CD14-positive monocyte (primary cell): ENCODE measurements at regions of chr16 and their contacts with region 1.

Region 1: DNA sequence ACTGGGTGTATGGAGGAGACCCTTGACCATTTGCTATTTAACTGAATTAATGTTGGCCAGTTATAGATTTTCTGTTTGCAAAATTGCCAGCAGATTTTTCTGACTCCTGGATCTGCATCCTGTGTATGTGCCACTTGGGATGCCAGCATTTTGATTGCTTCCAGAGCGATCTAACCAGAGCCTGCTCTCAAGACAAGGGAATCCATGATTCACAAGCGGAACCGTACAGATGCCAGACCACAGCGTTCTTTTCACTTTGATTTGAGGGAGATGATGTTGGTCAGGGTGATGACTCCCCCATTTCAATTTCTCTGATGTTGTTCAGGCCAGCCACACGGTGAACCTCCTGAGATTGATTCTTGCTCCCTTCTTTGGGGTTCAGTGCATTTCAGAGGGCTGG is 228.7 kb downstream of the CDH13 start:
- DNase-seq: no peak
- H3K4me3 ChIP-seq: no peak overlapping the region
- H3K4me3 Mint-ChIP-seq: no peak overlapping the region
- H3K27ac ChIP-seq: no peak overlapping the region
- H3K27ac Mint-ChIP-seq: no peak overlapping the region
- H3K4me1 ChIP-seq: no peaks in the 10 kb centered on the region
- H3K4me1 Mint-ChIP-seq: no peaks in the 10 kb centered on the region
- H3K27me3 ChIP-seq: no peaks in the 10 kb centered on the region
- H3K27me3 Mint-ChIP-seq: peaks cover 1 to 2% (median 2%) of the 10 kb centered on the region in 3 donors
- CTCF ChIP-seq: no peak

Region 2: GRCh38 chr16:82796047-82796446 is 59.4 kb before region 1 on chr16:
- intact Hi-C with region 1: loop called in 1 of 2 experiments (anchors 10 kb)
- DNase-seq: no peak
- H3K4me3 ChIP-seq: no peak overlapping the region
- H3K4me3 Mint-ChIP-seq: no peak overlapping the region
- H3K27ac ChIP-seq: no peak overlapping the region
- H3K27ac Mint-ChIP-seq: no peak overlapping the region
- H3K4me1 ChIP-seq: no peaks in the 10 kb centered on the region
- H3K4me1 Mint-ChIP-seq: peaks cover 3% of the 10 kb centered on the region
- H3K27me3 ChIP-seq: no peaks in the 10 kb centered on the region
- H3K27me3 Mint-ChIP-seq: peaks cover 0 to 4% (median 0%) of the 10 kb centered on the region in 3 donors
- CTCF ChIP-seq: no peak

Region 3: DNA sequence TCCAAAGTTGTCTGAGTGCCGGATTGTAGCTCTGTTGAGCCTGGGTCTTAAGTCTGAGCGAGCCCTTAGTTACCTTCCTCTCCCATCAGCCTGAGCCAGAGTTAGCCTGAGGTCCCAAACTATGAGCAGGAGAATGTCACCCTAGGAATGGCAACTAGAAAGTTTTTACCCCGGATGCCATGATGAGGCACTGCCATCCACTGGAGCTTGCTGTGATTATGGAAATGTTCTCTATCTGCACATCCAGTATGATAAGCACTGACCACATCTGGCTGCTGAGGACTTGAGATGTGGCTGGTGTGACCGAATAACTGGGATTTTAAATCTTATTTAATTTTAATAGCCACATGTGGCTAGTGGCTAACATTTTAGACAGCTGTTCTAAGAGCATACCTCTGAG is 321.3 kb after region 1 on chr16:
- intact Hi-C with region 1: no loop called
- DNase-seq: no peak
- H3K4me3 ChIP-seq: no peak overlapping the region
- H3K4me3 Mint-ChIP-seq: no peak overlapping the region
- H3K27ac ChIP-seq: no peak overlapping the region
- H3K27ac Mint-ChIP-seq: no peak overlapping the region
- H3K4me1 ChIP-seq: no peaks in the 10 kb centered on the region
- H3K4me1 Mint-ChIP-seq: no peaks in the 10 kb centered on the region
- H3K27me3 ChIP-seq: no peaks in the 10 kb centered on the region
- H3K27me3 Mint-ChIP-seq: peaks cover 0 to 4% (median 0%) of the 10 kb centered on the region in 3 donors
- CTCF ChIP-seq: no peak